BJ (cell line): ENCODE measurements at regions of chr11 and their contacts with region 1.

Region 1: GRCh38 chr11:126989942-126990715 is 10.4 kb downstream of the KIRREL3 start:
- DNase-seq: no peak
- H3K4me3 ChIP-seq: peak overlapping the region; percentile 17
- H3K27me3 ChIP-seq: no peaks in the 10 kb centered on the region
- CTCF ChIP-seq: peak; percentile 99

Region 2: GRCh38 chr11:126607374-126607773 is 382.8 kb before region 1 on chr11:
- CTCF ChIA-PET with region 1: interaction called, 83 read pairs
- POLR2A ChIA-PET with region 1: no interaction called
- DNase-seq: no peak
- H3K4me3 ChIP-seq: no peak overlapping the region
- H3K27me3 ChIP-seq: no peaks in the 10 kb centered on the region
- CTCF ChIP-seq: peak; percentile 94

Region 3: GRCh38 chr11:126716456-126717083 is 273.6 kb before region 1 on chr11:
- CTCF ChIA-PET with region 1: interaction called, 22 read pairs
- POLR2A ChIA-PET with region 1: no interaction called
- DNase-seq: no peak
- H3K4me3 ChIP-seq: no peak overlapping the region
- H3K27me3 ChIP-seq: no peaks in the 10 kb centered on the region
- CTCF ChIP-seq: peak; percentile 69

Region 4: GRCh38 chr11:126929179-126930061 is 60.7 kb before region 1 on chr11:
- CTCF ChIA-PET with region 1: interaction called, 5 read pairs
- POLR2A ChIA-PET with region 1: interaction called, 12 read pairs
- DNase-seq: peak; percentile 57
- H3K4me3 ChIP-seq: no peak overlapping the region
- H3K27me3 ChIP-seq: no peaks in the 10 kb centered on the region
- CTCF ChIP-seq: no peak

Region 5: DNA sequence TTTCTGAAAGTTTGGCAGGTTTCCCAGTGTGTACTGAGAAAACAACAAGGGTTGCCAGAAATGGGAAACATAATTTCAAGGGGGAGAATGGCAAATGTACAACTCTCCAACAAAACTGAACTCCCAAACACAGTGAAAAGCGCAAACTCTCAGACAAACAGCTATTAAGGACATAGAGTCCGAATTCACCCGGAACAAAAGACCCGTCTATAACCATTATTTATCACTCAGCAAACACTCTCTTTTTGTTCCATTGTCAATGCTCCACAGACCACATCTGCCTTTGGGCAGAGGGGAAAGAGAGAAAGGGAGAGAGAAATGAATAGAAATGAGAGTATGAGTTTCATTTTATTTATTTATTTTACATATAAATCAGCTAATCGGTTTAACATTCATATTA is 11.2 kb before region 1 on chr11:
- CTCF ChIA-PET with region 1: interaction called, 27 read pairs
- POLR2A ChIA-PET with region 1: no interaction called
- DNase-seq: no peak
- H3K4me3 ChIP-seq: no peak overlapping the region
- H3K27me3 ChIP-seq: no peaks in the 10 kb centered on the region
- CTCF ChIP-seq: no peak

Region 6: DNA sequence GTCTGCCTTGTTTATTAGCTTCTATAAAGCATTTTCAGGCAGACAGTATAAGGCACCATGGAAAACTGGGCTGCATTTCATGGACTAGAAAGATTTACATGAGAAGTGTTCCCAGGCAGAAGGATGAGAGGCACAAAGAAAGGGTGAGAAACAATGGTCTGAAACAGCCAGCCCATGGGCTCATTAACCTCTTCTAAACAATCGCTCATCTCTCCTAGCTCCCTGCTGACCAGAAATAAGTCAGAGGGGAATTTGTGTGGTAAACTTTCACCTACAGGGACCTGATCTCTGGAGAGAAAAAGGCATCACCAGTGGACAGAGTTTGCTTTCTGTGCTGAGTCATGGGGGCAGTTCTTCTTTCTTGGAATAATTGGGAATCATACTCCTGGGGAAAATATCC is 62.3 kb after region 1 on chr11:
- CTCF ChIA-PET with region 1: no interaction called
- POLR2A ChIA-PET with region 1: no interaction called
- DNase-seq: no peak
- H3K4me3 ChIP-seq: no peak overlapping the region
- H3K27me3 ChIP-seq: peaks cover 4% of the 10 kb centered on the region
- CTCF ChIP-seq: no peak